CD8-positive, alpha-beta T cell (primary cell): ENCODE measurements at regions of chr6 and their contacts with region 1.

Region 1: DNA sequence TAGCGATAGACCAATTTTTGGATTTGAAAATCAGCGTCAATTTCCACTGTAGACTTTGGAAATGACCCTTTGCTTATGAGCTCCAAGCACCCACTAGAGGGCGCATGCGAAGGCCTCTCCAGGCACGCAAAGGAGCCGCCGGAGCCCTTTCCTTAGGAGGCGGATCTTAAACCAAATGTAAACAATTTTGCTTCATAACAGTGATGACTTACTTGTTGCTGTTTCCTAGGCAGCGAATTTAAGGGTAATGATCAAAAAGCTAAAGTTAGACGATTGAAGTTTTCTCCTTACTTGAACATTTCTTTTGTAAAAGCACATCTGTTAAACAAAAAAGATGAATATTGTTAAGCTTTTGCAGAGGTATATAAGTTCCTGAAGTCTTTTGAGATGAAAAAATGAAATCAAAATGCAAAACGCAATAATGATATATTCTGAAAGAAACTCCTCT is 29.2 kb upstream of the EXOC2 start:
- DNase-seq: peak; percentile 36 to 79 (median 71)
- ATAC-seq: peak; percentile 81
- H3K4me3 ChIP-seq: no peak overlapping the region
- H3K4me3 Mint-ChIP-seq: peak overlapping the region; percentile 16
- H3K27ac ChIP-seq: no peak overlapping the region
- H3K27ac Mint-ChIP-seq: no peak overlapping the region
- H3K4me1 ChIP-seq: no peaks in the 10 kb centered on the region
- H3K4me1 Mint-ChIP-seq: peaks cover 3% of the 10 kb centered on the region
- H3K27me3 ChIP-seq: no peaks in the 10 kb centered on the region
- H3K27me3 Mint-ChIP-seq: peaks cover 6% of the 10 kb centered on the region
- CTCF ChIP-seq: peak; percentile 86

Region 2: DNA sequence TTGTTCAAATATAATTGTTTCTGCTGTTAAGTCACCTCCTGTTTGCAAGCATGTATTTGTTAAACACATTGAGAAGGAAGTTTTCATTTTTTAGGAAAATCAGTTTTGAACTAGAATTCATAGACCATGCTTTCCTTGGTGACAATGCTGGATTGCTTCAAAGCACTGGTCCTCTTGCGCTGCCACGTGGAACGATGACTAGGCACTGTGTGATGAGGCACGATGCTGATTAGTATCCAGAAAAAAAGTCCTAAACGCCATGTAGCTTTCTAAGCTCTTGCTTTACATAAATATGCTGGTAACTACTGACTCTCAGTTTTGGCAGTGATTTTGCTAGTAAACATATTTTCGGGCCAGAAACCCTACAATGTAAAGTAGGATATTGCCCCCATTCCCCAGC is 18.1 kb before region 1 on chr6:
- CTCF ChIA-PET with region 1: interaction called, 10 read pairs
- POLR2A ChIA-PET with region 1: no interaction called
- intact Hi-C with region 1: no loop called
- DNase-seq: no peak
- ATAC-seq: no peak
- H3K4me3 ChIP-seq: no peak overlapping the region
- H3K4me3 Mint-ChIP-seq: no peak overlapping the region
- H3K27ac ChIP-seq: no peak overlapping the region
- H3K27ac Mint-ChIP-seq: no peak overlapping the region
- H3K4me1 ChIP-seq: no peaks in the 10 kb centered on the region
- H3K4me1 Mint-ChIP-seq: no peaks in the 10 kb centered on the region
- H3K27me3 ChIP-seq: peaks cover 0 to 3% of the 10 kb centered on the region in 2 experiments
- H3K27me3 Mint-ChIP-seq: peaks cover 6% of the 10 kb centered on the region
- CTCF ChIP-seq: no peak

Region 3: GRCh38 chr6:710601-711571 is 11.2 kb before region 1 on chr6:
- CTCF ChIA-PET with region 1: interaction called, 15 read pairs
- POLR2A ChIA-PET with region 1: interaction called, 6 read pairs
- intact Hi-C with region 1: no loop called
- DNase-seq: peak; percentile 5 to 81 (median 41)
- ATAC-seq: peak; percentile 86
- H3K4me3 ChIP-seq: peak overlapping the region; percentile 81 to 84
- H3K4me3 Mint-ChIP-seq: peak overlapping the region; percentile 96
- H3K27ac ChIP-seq: peak overlapping the region; percentile 80 to 94
- H3K27ac Mint-ChIP-seq: peak overlapping the region; percentile 97
- H3K4me1 ChIP-seq: peaks cover 9% of the 10 kb centered on the region
- H3K4me1 Mint-ChIP-seq: peaks cover 19% of the 10 kb centered on the region
- H3K27me3 ChIP-seq: peaks cover 0 to 3% of the 10 kb centered on the region in 2 experiments
- H3K27me3 Mint-ChIP-seq: peaks cover 6% of the 10 kb centered on the region
- CTCF ChIP-seq: no peak

Region 4: DNA sequence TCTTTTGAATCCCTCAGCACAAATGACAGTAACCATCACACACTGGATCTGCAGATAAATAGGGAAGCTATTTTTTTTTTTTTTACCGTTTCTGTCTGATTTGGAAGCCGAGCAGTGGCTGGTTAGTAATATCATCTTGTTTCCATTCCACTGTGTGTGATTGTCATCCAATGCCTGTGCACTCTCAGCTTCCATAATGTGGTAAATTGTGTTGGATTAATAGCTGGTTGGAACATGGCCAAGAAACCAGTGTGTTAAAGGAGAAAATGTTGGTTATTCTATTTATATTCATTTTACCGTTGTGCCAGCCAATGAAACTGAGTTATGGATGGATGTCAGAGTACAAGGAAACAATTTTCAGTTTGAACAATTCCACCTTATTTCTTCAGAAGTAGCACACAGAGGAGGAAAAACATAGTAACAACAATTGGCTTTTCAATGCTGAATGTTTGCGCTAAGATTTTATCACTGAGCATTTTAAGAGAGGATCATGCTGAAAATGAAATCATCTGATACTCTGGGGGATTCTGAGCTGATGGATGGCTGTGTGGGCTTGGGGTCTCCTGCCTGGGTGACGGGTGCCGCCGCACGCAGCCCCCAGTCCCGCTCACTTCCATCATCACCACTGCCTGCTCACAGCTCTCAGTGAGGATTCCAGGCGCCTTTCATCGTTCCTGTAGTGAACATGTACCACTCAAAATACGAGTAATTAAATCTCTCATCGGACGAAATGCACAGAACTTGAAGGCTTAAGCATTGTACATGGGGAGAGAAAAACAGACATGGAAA is 11.5 kb after region 1 on chr6:
- CTCF ChIA-PET with region 1: interaction called, 19 read pairs
- POLR2A ChIA-PET with region 1: no interaction called
- intact Hi-C with region 1: no loop called
- DNase-seq: no peak
- ATAC-seq: no peak
- H3K4me3 ChIP-seq: no peak overlapping the region
- H3K4me3 Mint-ChIP-seq: no peak overlapping the region
- H3K27ac ChIP-seq: no peak overlapping the region
- H3K27ac Mint-ChIP-seq: no peak overlapping the region
- H3K4me1 ChIP-seq: no peaks in the 10 kb centered on the region
- H3K4me1 Mint-ChIP-seq: no peaks in the 10 kb centered on the region
- H3K27me3 ChIP-seq: no peaks in the 10 kb centered on the region
- H3K27me3 Mint-ChIP-seq: peaks cover 12% of the 10 kb centered on the region
- CTCF ChIP-seq: no peak

Region 5: DNA sequence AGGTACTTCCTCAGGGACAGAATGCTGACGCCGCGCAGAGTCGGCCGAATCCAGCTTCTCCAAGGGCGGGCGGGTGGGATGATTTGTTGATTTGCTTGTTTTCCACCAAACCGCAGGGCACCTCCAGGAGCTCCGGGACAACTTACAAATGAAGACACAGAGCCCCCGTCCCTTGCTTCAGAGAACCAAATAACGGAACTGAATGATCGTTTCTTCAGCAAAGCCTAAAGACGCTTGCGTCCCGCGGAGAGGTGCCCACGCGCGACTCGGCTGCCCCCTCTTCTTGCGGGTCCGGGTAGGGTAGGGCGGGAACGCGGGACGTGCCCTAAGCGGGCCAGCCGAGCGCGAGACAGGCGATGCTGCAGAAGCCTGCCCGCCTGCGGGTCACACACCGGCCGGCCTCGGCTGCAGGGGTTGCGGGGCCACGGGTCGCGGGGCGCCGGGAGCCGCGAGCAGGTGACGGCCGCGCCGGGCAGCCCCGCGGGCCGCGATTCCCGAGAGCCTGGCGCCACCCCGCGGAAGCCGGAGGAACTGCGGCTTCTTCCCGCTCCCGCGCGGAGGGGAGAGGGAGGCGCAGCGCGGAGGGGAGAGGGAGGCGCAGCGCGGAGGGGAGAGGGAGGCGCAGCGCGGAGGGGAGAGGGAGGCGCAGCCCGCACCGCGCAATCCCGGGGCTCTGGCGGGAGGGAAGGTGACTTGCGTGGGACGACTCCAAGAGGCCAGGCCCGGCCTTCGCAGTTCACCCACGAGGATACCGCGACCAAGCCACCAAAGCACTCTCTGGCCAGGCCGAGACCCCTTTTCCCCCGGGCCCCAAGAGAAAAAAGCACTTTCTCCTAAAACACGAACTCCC is 659.6 kb after region 1 on chr6:
- CTCF ChIA-PET with region 1: no interaction called
- POLR2A ChIA-PET with region 1: no interaction called
- intact Hi-C with region 1: loop called in 1 of 2 experiments (anchors 5 kb)
- DNase-seq: peak in 7 of 9 experiments; percentile 25 to 70 (median 51)
- ATAC-seq: peak; percentile 62
- H3K4me3 ChIP-seq: peak overlapping the region in 1 of 2 experiments; percentile 33
- H3K4me3 Mint-ChIP-seq: peak overlapping the region; percentile 1
- H3K27ac ChIP-seq: no peak overlapping the region
- H3K27ac Mint-ChIP-seq: no peak overlapping the region
- H3K4me1 ChIP-seq: peaks cover 29% of the 10 kb centered on the region
- H3K4me1 Mint-ChIP-seq: peaks cover 32% of the 10 kb centered on the region
- H3K27me3 ChIP-seq: peaks cover 34 to 46% of the 10 kb centered on the region in 2 experiments
- H3K27me3 Mint-ChIP-seq: peaks cover 61% of the 10 kb centered on the region
- CTCF ChIP-seq: peak; percentile 65

Region 6: DNA sequence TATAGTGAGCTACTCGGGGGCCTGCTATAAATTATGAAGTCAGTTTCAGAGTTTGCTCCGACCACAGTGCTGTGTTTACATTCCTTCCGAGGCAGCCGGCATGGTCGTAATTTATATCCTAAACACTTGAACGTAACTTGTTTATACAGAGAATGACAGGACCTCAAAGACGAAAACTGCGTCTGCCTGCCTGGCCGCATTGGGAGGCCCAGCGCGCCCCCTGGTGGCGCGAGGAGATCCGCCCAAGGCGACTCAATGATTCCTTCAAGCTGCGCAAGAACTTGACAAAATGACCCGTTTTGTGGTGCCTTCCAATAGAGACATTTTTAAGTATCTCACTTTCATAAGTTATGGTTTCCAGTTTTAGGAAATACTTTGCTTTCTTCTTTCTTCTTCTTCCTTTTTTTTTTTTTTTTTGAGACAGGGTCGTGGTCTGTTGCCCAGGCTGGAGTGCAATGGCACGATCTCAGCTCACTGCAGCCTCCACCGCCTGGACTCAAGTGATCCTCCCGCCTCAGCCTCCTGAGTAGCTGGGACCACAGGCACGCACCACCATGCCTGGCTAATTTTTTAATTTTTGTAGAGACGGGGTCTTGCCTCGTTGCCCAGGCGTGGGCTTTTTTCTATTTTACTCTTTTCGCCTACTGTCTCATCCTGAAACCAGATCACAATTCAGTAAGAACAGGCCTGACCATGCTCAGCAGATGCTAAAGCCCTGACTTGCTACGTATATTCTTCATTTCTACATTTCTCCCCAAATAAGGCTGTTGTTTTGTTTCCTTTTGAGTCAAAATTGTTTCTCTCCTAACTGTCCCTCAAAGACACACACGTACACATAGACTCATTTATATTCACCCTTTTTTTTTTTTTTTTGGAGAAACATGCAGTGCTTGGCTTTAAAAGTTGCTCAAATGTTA is 675.1 kb after region 1 on chr6:
- CTCF ChIA-PET with region 1: no interaction called
- POLR2A ChIA-PET with region 1: no interaction called
- intact Hi-C with region 1: loop called in 1 of 2 experiments (anchors 10 kb)
- DNase-seq: peak; percentile 38 to 82 (median 66)
- ATAC-seq: peak; percentile 61
- H3K4me3 ChIP-seq: no peak overlapping the region
- H3K4me3 Mint-ChIP-seq: no peak overlapping the region
- H3K27ac ChIP-seq: no peak overlapping the region
- H3K27ac Mint-ChIP-seq: no peak overlapping the region
- H3K4me1 ChIP-seq: peaks cover 3% of the 10 kb centered on the region
- H3K4me1 Mint-ChIP-seq: peaks cover 5% of the 10 kb centered on the region
- H3K27me3 ChIP-seq: peaks cover 5 to 13% of the 10 kb centered on the region in 2 experiments
- H3K27me3 Mint-ChIP-seq: peaks cover 52% of the 10 kb centered on the region
- CTCF ChIP-seq: peak; percentile 86

Region 7: GRCh38 chr6:1436334-1437306 is 714.5 kb after region 1 on chr6:
- CTCF ChIA-PET with region 1: interaction called, 5 read pairs
- POLR2A ChIA-PET with region 1: no interaction called
- intact Hi-C with region 1: loop called in 1 of 2 experiments (anchors 2 kb)
- DNase-seq: peak in 6 of 9 experiments; percentile 6 to 67 (median 41)
- ATAC-seq: peak; percentile 71
- H3K4me3 ChIP-seq: no peak overlapping the region
- H3K4me3 Mint-ChIP-seq: no peak overlapping the region
- H3K27ac ChIP-seq: no peak overlapping the region
- H3K27ac Mint-ChIP-seq: no peak overlapping the region
- H3K4me1 ChIP-seq: no peaks in the 10 kb centered on the region
- H3K4me1 Mint-ChIP-seq: no peaks in the 10 kb centered on the region
- H3K27me3 ChIP-seq: peaks cover 0 to 4% of the 10 kb centered on the region in 2 experiments
- H3K27me3 Mint-ChIP-seq: peaks cover 33% of the 10 kb centered on the region
- CTCF ChIP-seq: peak; percentile 70